Mammary epithelial cell (primary cell): ENCODE measurements at regions of chr4 and their contacts with region 1.

Region 1: DNA sequence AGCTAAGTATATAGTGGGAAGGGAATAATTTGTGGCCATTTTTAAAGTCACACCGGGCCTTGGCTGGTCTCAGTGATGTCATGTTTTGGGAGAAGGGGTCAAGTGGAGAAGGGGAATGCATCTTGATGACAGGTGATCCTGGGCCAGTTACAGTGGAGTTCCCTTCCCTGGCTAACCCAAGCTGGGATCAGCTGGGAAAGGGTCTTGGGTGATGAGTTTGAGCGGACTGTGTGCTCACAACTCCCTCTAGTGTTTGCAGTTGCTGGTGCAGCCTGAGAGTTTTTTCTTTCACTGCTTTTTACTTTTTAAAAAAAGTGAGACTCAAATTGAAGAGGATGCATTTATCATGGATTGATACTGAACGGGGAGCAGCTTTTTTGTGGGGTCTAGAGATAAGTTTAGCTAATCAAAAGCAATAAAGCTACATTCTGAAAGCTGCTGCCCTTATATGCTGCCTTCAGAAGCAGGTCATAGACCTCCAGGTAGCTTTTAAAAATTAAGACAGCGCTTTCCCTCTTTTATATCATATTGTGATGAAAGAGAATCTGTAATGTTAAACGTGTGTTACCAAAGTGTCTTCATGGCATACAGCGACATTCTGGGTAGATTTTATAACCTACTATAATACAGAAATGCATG is 164.7 kb downstream of the DCLK2 start:
- DNase-seq: no peak
- H3K4me3 ChIP-seq: no peak overlapping the region
- H3K27ac ChIP-seq: no peak overlapping the region
- H3K4me1 ChIP-seq: peaks cover 3% of the 10 kb centered on the region
- H3K27me3 ChIP-seq: no peaks in the 10 kb centered on the region
- CTCF ChIP-seq: peak; percentile 91 to 94

Region 2: GRCh38 chr4:149914119-149915115 is 328.5 kb before region 1 on chr4:
- CTCF ChIA-PET with region 1: no interaction called
- dilution Hi-C with region 1: no loop called
- in situ Hi-C with region 1: no loop called
- intact Hi-C with region 1: loop called (anchors 5 kb)
- DNase-seq: peak; percentile 13
- H3K4me3 ChIP-seq: no peak overlapping the region
- H3K27ac ChIP-seq: no peak overlapping the region
- H3K4me1 ChIP-seq: no peaks in the 10 kb centered on the region
- H3K27me3 ChIP-seq: no peaks in the 10 kb centered on the region
- CTCF ChIP-seq: peak; percentile 79 to 87

Region 3: DNA sequence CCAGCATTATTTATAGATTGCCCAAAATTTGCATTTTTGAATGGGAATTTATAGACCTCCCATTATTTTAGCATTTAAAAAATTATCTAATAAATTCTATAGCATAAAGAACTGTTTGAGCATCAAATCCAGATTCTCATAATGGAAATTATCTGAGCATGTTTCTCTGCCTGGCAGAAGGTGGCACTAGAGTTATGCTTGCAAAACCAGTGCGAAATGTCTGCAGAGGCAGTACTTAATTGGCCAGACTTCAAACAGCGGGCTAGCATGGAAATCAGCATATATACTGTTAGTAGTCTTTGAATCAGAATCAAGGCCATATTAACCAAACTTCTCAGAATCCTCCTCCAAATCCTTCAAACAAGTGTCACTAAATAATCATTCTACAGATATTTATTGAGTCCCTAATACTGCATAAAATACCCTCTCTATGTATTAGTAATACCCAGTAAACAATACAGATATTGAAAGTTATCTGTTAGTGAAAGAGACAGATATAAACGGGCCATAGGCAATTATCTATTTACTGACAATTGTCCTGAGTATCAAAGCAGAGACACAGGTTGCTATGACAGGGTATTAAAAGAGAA is 243.4 kb before region 1 on chr4:
- CTCF ChIA-PET with region 1: no interaction called
- dilution Hi-C with region 1: no loop called
- in situ Hi-C with region 1: no loop called
- intact Hi-C with region 1: loop called (anchors 1 kb)
- DNase-seq: peak; percentile 36
- H3K4me3 ChIP-seq: no peak overlapping the region
- H3K27ac ChIP-seq: no peak overlapping the region
- H3K4me1 ChIP-seq: peaks cover 13% of the 10 kb centered on the region
- H3K27me3 ChIP-seq: no peaks in the 10 kb centered on the region
- CTCF ChIP-seq: peak; percentile 59 to 74

Region 4: GRCh38 chr4:150010525-150011126 is 232.3 kb before region 1 on chr4:
- CTCF ChIA-PET with region 1: no interaction called
- dilution Hi-C with region 1: no loop called
- in situ Hi-C with region 1: no loop called
- intact Hi-C with region 1: loop called (anchors 1 kb)
- DNase-seq: peak; percentile 52
- H3K4me3 ChIP-seq: no peak overlapping the region
- H3K27ac ChIP-seq: no peak overlapping the region
- H3K4me1 ChIP-seq: no peaks in the 10 kb centered on the region
- H3K27me3 ChIP-seq: no peaks in the 10 kb centered on the region
- CTCF ChIP-seq: peak; percentile 44 to 61

Region 5: DNA sequence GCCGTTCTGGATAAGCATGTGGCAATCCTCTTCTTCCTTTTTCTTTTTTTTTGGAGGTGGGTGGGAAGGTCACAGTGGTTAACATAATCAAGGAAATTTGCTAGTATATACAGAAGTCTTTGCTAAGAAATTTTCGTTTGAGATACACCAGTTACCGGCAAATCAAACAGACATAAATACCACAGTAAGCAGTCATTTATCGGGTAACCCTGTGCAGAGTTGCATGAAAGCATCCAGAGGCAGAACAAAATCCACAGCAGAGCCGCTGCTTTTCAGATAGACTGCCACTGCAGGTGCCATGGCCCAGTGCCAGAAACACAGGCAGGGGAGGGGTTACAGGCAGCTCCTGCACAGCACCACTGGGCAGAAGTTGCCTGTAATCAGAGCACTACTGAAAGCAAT is 159.9 kb after region 1 on chr4:
- CTCF ChIA-PET with region 1: interaction called, 12 read pairs
- dilution Hi-C with region 1: no loop called
- in situ Hi-C with region 1: no loop called
- intact Hi-C with region 1: no loop called
- DNase-seq: no peak
- H3K4me3 ChIP-seq: no peak overlapping the region
- H3K27ac ChIP-seq: no peak overlapping the region
- H3K4me1 ChIP-seq: no peaks in the 10 kb centered on the region
- H3K27me3 ChIP-seq: no peaks in the 10 kb centered on the region
- CTCF ChIP-seq: no peak

Region 6: DNA sequence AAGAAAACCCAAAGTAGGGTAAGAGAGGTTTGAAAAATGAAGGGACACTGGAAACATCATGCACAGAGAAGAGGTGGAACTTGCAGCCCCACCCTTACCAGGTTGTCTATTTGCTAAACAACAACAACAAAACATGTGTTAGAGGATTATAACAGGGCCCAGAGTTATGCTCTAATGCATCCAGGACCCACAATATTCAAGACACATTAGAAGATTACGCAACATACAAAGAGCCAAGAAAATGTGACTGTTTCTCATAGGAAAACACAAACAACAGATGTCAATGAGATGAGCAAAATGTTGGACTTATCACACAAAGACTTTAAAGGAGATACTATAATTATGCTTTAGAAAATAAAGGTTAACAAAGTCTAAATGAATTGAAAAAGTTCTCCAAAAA is 643.7 kb after region 1 on chr4:
- CTCF ChIA-PET with region 1: no interaction called
- dilution Hi-C with region 1: no loop called
- in situ Hi-C with region 1: no loop called
- intact Hi-C with region 1: no loop called
- DNase-seq: no peak
- H3K4me3 ChIP-seq: no peak overlapping the region
- H3K27ac ChIP-seq: no peak overlapping the region
- H3K4me1 ChIP-seq: no peaks in the 10 kb centered on the region
- H3K27me3 ChIP-seq: no peaks in the 10 kb centered on the region
- CTCF ChIP-seq: no peak